ENCODE measurements at regions of chr1 and their contacts with region 1.

Region 1: GRCh38 chr1:39720094-39720999 is 18.3 kb upstream of the PPIE start:
- DNase-seq: no peak
- ATAC-seq: peak; percentile 48 to 68 (median 60)
- H3K4me3 ChIP-seq: no peak overlapping the region
- H3K27ac ChIP-seq: no peak overlapping the region
- H3K4me1 ChIP-seq: peaks cover 0 to 5% (median 0%) of the 10 kb centered on the region in 12 donors
- H3K27me3 ChIP-seq: peaks cover 0 to 42% (median 11%) of the 10 kb centered on the region in 9 donors
- CTCF ChIP-seq: peak; percentile 61 to 83 (median 74)
- POLR2A ChIP-seq: no peak

Region 2: DNA sequence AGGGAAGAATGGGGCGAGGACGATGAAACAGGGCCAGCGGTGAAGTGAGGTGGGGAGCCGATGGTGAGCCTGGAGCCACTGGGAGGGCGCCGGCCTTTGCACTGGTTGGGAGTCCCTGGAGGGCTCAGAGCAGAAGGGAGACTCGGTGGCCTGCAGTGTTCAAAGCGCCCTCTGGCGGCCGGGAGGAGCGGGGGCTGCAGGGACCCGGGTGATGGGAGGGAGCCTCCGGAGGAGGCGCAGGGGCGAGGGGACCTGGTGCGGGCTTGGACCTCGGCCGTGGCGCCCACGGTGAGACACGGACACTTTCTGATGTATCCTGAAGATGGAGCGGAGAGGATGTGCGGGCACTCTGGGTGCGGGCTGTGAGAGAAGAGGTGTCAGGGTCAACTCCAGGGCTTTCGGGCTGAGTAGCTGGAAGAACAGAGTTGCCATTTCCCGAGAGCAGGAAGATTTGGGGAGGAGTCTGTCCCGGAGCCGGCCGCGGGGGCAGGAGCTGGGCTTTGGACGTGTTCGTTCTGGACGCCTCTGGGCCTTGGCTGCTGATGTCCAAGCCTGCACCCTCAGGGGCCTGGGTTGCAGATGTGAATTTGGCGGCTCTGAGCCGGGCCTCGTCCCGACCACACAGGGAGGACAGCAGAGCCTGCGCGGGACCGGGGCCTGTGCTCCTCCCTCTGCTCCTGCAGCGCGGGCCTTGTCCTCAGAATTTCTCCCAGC is 110.6 kb before region 1 on chr1:
- intact Hi-C with region 1: loop called (anchors 1 to 5 kb)
- DNase-seq: peak; percentile 68 to 87 (median 77)
- ATAC-seq: peak; percentile 41 to 90 (median 80)
- H3K4me3 ChIP-seq: peak overlapping the region in 2 of 12 donors; percentile 5 to 20
- H3K27ac ChIP-seq: peak overlapping the region in 9 of 12 donors; percentile 37 to 72 (median 42)
- H3K4me1 ChIP-seq: peaks cover 0 to 19% (median 7%) of the 10 kb centered on the region in 12 donors
- H3K27me3 ChIP-seq: peaks cover 0 to 10% (median 0%) of the 10 kb centered on the region in 9 donors
- CTCF ChIP-seq: peak; percentile 50 to 87 (median 68)
- POLR2A ChIP-seq: no peak

Region 3: DNA sequence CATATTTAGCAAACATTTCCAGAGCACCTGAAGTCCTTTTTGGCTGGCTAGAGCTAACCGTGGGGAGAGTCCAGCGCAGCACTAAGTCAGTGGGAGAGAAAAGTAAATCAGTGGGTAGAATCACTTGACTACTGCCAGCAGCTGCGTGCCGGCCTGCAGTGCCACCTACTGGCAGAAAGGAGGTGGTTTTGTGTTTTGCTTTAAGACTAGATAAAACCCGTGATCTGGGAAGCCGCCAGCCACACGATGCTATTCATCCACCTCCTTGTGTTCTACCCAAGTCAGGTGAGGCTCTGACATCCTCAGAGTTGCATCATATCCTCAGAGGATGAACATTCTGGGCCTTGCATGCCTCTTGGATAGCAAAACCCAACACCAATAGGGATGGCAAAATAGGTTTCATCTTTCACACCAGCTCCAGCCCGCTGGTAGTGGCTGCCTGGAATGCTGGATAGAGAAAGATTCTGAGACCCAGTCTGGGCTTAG is 66.8 kb before region 1 on chr1:
- intact Hi-C with region 1: loop called in 4 of 10 experiments (anchors 5 to 10 kb)
- DNase-seq: peak; percentile 69 to 86 (median 80)
- ATAC-seq: peak in 3 of 4 donors; percentile 57 to 70 (median 63)
- H3K4me3 ChIP-seq: no peak overlapping the region
- H3K27ac ChIP-seq: peak overlapping the region in 6 of 12 donors; percentile 61 to 77 (median 74)
- H3K4me1 ChIP-seq: peaks cover 0 to 51% (median 14%) of the 10 kb centered on the region in 12 donors
- H3K27me3 ChIP-seq: no peaks in the 10 kb centered on the region
- CTCF ChIP-seq: peak; percentile 84 to 96 (median 92)
- POLR2A ChIP-seq: no peak

Region 4: DNA sequence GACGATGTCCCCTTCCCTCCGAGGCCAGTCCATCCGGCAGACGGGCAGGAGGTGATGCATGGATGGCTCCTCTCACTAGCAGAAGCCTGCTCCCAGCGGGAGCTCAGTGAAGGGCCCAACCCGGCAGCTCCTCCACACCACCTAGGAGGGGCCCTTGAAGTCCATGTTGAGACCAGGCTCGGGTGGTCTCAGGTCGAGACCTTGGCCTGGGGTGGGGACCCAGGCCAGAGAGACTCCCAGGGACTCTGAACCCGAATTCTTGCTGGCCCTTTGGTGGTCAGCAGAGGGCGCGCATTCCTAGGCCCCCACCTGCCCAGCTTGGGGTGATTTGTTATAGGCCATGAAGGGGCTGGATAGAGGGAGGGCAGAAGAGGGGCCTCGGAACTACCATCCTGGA is 47.8 kb before region 1 on chr1:
- intact Hi-C with region 1: loop called in 3 of 10 experiments (anchors 2 to 5 kb)
- DNase-seq: no peak
- ATAC-seq: peak; percentile 13 to 40 (median 24)
- H3K4me3 ChIP-seq: peak overlapping the region in 11 of 12 donors; percentile 24 to 86 (median 66)
- H3K27ac ChIP-seq: peak overlapping the region in 8 of 12 donors; percentile 75 to 91 (median 86)
- H3K4me1 ChIP-seq: peaks cover 0 to 48% (median 19%) of the 10 kb centered on the region in 12 donors
- H3K27me3 ChIP-seq: peaks cover 0 to 26% (median 4%) of the 10 kb centered on the region in 9 donors
- CTCF ChIP-seq: peak in 11 of 12 donors; percentile 21 to 60 (median 48)
- POLR2A ChIP-seq: no peak

Region 5: DNA sequence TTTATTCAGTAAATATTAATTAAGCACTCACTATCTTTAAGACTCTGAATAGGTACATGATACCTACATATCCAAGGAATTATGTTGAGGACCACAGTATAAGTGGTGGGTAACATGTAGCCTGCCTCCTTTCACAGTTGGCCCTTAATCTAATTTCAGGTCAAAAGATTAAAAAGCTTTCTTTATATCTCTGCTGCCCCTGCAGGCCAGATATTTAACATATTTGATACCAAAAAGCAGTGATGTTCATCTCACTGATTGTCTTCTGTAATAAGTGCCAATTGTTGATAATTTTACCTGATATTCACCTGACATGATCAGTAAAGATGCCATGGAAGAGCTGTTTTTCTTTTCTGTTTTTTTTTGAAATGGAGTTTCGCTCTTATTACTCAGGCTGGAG is 477.3 kb after region 1 on chr1:
- intact Hi-C with region 1: no loop called
- DNase-seq: no peak
- ATAC-seq: no peak
- H3K4me3 ChIP-seq: no peak overlapping the region
- H3K27ac ChIP-seq: no peak overlapping the region
- H3K4me1 ChIP-seq: peaks cover 0 to 14% (median 1%) of the 10 kb centered on the region in 12 donors
- H3K27me3 ChIP-seq: no peaks in the 10 kb centered on the region
- CTCF ChIP-seq: no peak
- POLR2A ChIP-seq: no peak

Measured in heart left ventricle (tissue), 16 donors.